Esophagus squamous epithelium (tissue), 5 donors: ENCODE measurements at regions of chr1 and their contacts with region 1.

Region 1: DNA sequence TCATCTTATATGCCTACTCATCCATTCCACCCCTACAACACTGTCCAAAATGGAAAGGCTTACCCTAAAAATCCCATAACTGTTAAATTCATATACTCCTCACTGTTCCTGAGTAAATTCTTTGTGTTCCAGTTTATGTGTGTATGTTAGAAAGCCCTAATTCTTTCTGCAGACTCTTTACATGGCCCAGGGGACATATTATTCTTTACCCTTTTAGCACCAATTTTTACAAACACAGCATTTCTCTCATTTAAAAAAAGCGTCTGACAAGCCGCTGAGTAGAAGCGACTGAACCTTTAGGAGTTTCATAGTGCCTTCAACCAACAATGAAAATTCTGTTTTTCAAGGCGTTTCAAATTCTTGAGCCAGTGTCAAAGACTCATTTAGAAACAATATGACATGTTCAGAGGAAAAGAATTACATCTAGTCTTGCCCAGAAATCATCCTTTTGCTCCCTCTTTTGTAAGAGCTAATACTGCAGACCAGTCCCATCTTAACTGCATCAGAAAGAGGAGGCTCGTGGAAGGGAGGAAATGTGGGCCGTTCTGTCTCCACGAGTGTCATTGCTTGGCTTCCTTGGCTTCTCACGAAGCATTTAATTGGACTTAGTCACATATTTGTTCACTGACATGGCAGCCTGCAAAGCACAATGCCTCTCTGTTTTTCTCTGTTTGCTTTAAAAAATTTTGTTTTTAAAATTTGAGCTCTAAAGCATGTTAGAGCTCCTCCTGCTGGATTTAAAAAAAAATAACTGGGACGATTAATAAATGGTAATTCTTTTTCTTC is 21.3 kb upstream of the C1orf105 start:
- DNase-seq: no peak
- H3K4me3 ChIP-seq: peak overlapping the region in 2 of 4 donors; percentile 3 to 42
- H3K27ac ChIP-seq: peak overlapping the region in 3 of 4 donors; percentile 66 to 83 (median 82)
- H3K4me1 ChIP-seq: peaks cover 5 to 46% (median 6%) of the 10 kb centered on the region in 3 donors
- H3K27me3 ChIP-seq: no peaks in the 10 kb centered on the region
- CTCF ChIP-seq: peak; percentile 58 to 77 (median 72)
- POLR2A ChIP-seq: no peak

Region 2: GRCh38 chr1:172002725-172003345 is 396.3 kb before region 1 on chr1:
- intact Hi-C with region 1: loop called (anchors 5 kb)
- DNase-seq: no peak
- H3K4me3 ChIP-seq: no peak overlapping the region
- H3K27ac ChIP-seq: no peak overlapping the region
- H3K4me1 ChIP-seq: no peaks in the 10 kb centered on the region
- H3K27me3 ChIP-seq: no peaks in the 10 kb centered on the region
- CTCF ChIP-seq: peak; percentile 28 to 72 (median 64)
- POLR2A ChIP-seq: no peak

Region 3: DNA sequence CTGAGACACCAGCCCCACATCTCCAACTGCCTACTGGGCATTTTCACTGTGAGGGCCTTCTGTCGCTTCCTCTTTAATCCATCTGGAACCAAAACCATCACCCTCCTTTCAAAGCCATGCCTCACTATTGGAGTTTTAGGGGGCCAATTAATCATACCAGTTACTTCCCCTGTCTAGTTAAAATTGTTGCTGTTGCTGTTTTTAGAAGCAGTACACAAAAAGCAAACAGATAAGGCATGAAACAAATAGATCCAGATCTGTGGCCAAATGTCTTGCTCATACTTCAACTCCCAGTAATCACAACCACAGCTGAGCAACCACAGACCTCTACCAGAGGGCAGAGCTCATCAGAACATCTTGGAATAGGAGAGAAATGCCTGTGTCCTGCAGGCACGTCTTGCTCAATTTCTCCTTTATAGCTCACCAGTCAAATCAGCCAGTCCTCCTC is 112.5 kb before region 1 on chr1:
- intact Hi-C with region 1: loop called (anchors 10 kb)
- DNase-seq: no peak
- H3K4me3 ChIP-seq: no peak overlapping the region
- H3K27ac ChIP-seq: peak overlapping the region in 2 of 4 donors; percentile 11 to 64
- H3K4me1 ChIP-seq: peaks cover 0 to 18% (median 3%) of the 10 kb centered on the region in 3 donors
- H3K27me3 ChIP-seq: no peaks in the 10 kb centered on the region
- CTCF ChIP-seq: no peak
- POLR2A ChIP-seq: no peak

Region 4: DNA sequence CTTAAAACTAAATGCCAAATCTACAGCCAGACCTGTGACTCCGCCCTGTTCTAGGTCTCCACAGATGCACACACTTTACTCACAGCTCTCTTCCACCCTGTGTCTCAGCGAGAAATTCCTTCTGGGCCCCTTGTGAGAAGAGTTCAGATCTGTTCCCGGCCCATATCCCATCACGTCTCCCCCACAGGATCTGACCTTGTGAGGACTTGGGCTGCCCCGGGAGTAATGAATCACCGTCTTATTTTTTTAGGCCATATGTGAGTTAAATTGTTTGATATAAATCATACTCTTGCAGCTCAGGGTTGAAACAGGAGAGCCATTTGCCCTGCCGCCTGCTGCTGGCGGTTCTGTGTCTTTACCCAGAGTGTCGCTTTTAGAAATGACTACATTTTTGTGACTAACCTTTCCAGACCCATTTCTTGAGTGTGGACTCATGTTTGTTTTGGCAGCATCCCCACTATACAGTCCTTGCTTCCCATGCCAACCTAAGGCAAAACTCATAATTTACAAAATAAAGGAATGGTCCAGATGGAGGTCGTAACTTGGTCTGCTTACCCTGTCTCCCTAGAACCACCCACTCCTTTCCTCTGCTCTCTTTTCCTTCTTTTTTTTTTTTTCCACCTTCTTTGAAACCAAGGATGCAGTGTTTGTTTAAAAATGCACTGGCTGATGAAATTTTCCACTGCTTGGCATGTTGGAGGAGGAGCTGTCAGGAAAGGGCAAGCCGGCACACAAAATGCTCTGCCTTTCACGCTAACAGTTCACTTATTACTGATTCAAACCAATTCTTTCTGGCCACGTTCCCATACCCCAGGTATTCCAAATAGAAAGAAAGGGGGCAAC is 76.7 kb before region 1 on chr1:
- intact Hi-C with region 1: no loop called
- DNase-seq: no peak
- H3K4me3 ChIP-seq: peak overlapping the region in 2 of 4 donors; percentile 10 to 42
- H3K27ac ChIP-seq: peak overlapping the region; percentile 51 to 84 (median 76)
- H3K4me1 ChIP-seq: peaks cover 7 to 46% (median 25%) of the 10 kb centered on the region in 3 donors
- H3K27me3 ChIP-seq: no peaks in the 10 kb centered on the region
- CTCF ChIP-seq: no peak
- POLR2A ChIP-seq: no peak

Region 5: DNA sequence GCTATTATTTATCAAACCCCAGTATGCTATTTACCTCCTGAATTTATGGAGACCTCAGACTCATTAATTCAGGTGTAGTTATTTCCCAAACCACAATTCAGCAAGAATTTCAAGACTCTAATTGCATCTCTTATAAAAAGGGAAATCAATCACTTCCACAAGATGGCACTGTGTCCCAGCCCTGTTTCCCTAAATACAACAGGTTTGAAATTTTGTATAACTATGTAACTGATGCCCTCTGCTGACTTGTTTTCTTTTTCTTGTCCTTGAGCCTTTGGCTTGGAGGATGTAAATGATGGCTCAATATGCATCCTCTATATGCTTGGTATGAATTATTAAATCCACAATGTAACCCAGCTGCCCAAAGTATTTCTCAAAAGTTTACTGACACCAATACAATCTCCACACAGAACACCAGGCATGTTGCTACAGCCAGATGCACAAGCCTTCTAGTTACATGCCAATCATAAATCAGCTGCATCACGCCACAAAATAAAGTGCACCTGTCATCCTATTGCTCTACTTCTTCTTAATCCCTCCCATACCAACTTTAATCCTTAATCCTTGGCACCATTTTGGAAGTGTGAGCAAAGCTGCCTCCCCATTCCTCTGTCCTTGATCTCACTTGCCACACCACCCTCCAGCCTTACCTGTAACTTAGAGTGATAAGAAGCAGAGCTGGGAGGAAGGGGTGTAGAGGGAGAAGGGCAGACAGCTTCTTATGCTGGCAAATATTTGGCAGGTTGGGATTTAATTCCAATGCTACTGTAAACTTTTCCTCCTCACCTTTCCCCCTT is 30.4 kb after region 1 on chr1:
- intact Hi-C with region 1: no loop called
- DNase-seq: no peak
- H3K4me3 ChIP-seq: no peak overlapping the region
- H3K27ac ChIP-seq: no peak overlapping the region
- H3K4me1 ChIP-seq: peaks cover 3 to 25% (median 8%) of the 10 kb centered on the region in 3 donors
- H3K27me3 ChIP-seq: no peaks in the 10 kb centered on the region
- CTCF ChIP-seq: peak; percentile 47 to 81 (median 64)
- POLR2A ChIP-seq: no peak

Region 6: GRCh38 chr1:172532700-172533509 is 133.7 kb after region 1 on chr1 and contains the start of gene SUCO:
- intact Hi-C with region 1: no loop called
- DNase-seq: peak; percentile 98
- H3K4me3 ChIP-seq: peak within 1 kb of the TSS; percentile 63 to 98 (median 93)
- H3K27ac ChIP-seq: peak within 1 kb of the TSS; percentile 97 to 100 (median 99)
- H3K4me1 ChIP-seq: peaks cover 6 to 52% (median 25%) of the 10 kb centered on the region in 3 donors
- H3K27me3 ChIP-seq: no peaks in the 10 kb centered on the region
- CTCF ChIP-seq: peak in 1 of 6 experiments; percentile 3
- POLR2A ChIP-seq: peak in 3 of 4 donors; percentile 98 to 99 (median 99)
- total RNA-seq, gene SUCO: 18.6 to 26.9 (median 23.4) TPM